WTC11 (cell line): ENCODE measurements at regions of chr6 and their contacts with region 1.

Region 1: GRCh38 chr6:42322676-42323075 is 105.0 kb upstream of the MRPS10 start:
- DNase-seq: peak; percentile 70
- ATAC-seq: peak; percentile 93
- H3K4me3 Mint-ChIP-seq: no peak overlapping the region
- H3K27ac Mint-ChIP-seq: no peak overlapping the region
- H3K4me1 Mint-ChIP-seq: peaks cover 15% of the 10 kb centered on the region
- H3K27me3 Mint-ChIP-seq: no peaks in the 10 kb centered on the region
- CTCF ChIP-seq: peak; percentile 44

Region 2: GRCh38 chr6:42251911-42252637 is 70.6 kb before region 1 on chr6:
- CTCF ChIA-PET with region 1: no interaction called
- POLR2A ChIA-PET with region 1: no interaction called
- DNase-seq: no peak
- ATAC-seq: no peak
- H3K4me3 Mint-ChIP-seq: no peak overlapping the region
- H3K27ac Mint-ChIP-seq: no peak overlapping the region
- H3K4me1 Mint-ChIP-seq: peaks cover 11% of the 10 kb centered on the region
- H3K27me3 Mint-ChIP-seq: no peaks in the 10 kb centered on the region
- CTCF ChIP-seq: no peak

Region 3: GRCh38 chr6:42335896-42336295 is 13.2 kb after region 1 on chr6:
- CTCF ChIA-PET with region 1: interaction called, 12 read pairs
- POLR2A ChIA-PET with region 1: no interaction called
- DNase-seq: no peak
- ATAC-seq: no peak
- H3K4me3 Mint-ChIP-seq: no peak overlapping the region
- H3K27ac Mint-ChIP-seq: no peak overlapping the region
- H3K4me1 Mint-ChIP-seq: peaks cover 24% of the 10 kb centered on the region
- H3K27me3 Mint-ChIP-seq: no peaks in the 10 kb centered on the region
- CTCF ChIP-seq: no peak